ENCODE measurements at regions of chr16 and their contacts with region 1.

Region 1: GRCh38 chr16:27449434-27450195 is 47.6 kb downstream of the IL21R start:
- DNase-seq: peak; percentile 78
- ATAC-seq: peak; percentile 78
- H3K4me3 Mint-ChIP-seq: peak overlapping the region; percentile 85
- H3K27ac Mint-ChIP-seq: peak overlapping the region; percentile 99
- H3K4me1 Mint-ChIP-seq: peaks cover 97% of the 10 kb centered on the region
- H3K27me3 Mint-ChIP-seq: no peaks in the 10 kb centered on the region
- CTCF ChIP-seq: no peak

Region 2: DNA sequence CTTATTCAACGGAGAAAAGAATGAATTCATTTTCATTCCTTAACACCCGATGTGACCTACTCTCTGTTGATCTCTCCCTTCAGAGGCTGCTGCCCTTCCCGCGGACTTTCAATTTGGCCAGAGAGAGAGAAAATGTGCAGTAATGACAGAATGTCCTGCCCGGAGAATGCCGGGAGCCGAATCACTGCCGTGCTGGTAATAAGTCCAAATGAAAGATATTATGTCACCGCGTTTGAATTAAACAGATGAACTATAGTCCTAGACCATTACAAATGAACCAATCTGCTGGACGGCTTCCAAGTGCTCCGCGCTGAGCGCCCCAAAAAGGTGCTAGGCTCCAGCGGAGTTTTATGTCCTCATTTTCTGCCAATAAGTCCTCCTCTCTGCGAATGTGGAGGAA is 397.6 kb before region 1 on chr16:
- CTCF ChIA-PET with region 1: no interaction called
- POLR2A ChIA-PET with region 1: no interaction called
- intact Hi-C with region 1: no loop called
- DNase-seq: no peak
- ATAC-seq: no peak
- H3K4me3 Mint-ChIP-seq: no peak overlapping the region
- H3K27ac Mint-ChIP-seq: no peak overlapping the region
- H3K4me1 Mint-ChIP-seq: no peaks in the 10 kb centered on the region
- H3K27me3 Mint-ChIP-seq: no peaks in the 10 kb centered on the region
- CTCF ChIP-seq: no peak

Region 3: GRCh38 chr16:27179500-27180072 is 270.0 kb before region 1 on chr16:
- CTCF ChIA-PET with region 1: interaction called, 11 read pairs
- POLR2A ChIA-PET with region 1: interaction called, 5 read pairs
- intact Hi-C with region 1: no loop called
- DNase-seq: peak; percentile 73
- ATAC-seq: peak; percentile 99
- H3K4me3 Mint-ChIP-seq: no peak overlapping the region
- H3K27ac Mint-ChIP-seq: peak overlapping the region; percentile 5
- H3K4me1 Mint-ChIP-seq: peaks cover 28% of the 10 kb centered on the region
- H3K27me3 Mint-ChIP-seq: no peaks in the 10 kb centered on the region
- CTCF ChIP-seq: peak; percentile 49

Region 4: DNA sequence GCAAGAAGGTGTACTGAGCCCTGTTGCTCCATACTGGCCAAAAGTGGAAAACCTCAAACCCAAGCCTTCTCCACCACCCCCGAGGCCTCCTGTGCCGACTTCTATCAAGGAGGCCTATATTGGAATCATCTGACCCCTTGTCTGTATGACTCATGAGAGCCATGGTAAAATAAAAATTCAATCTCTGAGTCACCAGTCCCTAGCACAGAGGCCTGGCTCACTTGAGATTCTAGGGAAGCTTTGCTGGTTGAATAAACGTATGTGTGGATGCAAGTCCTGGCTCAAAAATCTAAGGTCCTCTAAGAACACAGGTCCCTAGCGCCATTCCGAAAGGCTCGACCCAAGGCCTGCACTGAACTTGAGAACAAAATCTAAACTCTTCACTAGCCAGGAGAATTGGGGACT is 196.1 kb before region 1 on chr16:
- CTCF ChIA-PET with region 1: no interaction called
- POLR2A ChIA-PET with region 1: interaction called, 11 read pairs
- intact Hi-C with region 1: no loop called
- DNase-seq: no peak
- ATAC-seq: peak; percentile 40
- H3K4me3 Mint-ChIP-seq: peak overlapping the region; percentile 65
- H3K27ac Mint-ChIP-seq: peak overlapping the region; percentile 88
- H3K4me1 Mint-ChIP-seq: peaks cover 65% of the 10 kb centered on the region
- H3K27me3 Mint-ChIP-seq: no peaks in the 10 kb centered on the region
- CTCF ChIP-seq: no peak

Region 5: GRCh38 chr16:27318392-27319226 is 131.0 kb before region 1 on chr16:
- CTCF ChIA-PET with region 1: no interaction called
- POLR2A ChIA-PET with region 1: interaction called, 6 read pairs
- intact Hi-C with region 1: loop called (anchors 1 kb)
- DNase-seq: peak; percentile 43
- ATAC-seq: peak; percentile 72
- H3K4me3 Mint-ChIP-seq: peak overlapping the region; percentile 88
- H3K27ac Mint-ChIP-seq: peak overlapping the region; percentile 90
- H3K4me1 Mint-ChIP-seq: peaks cover 90% of the 10 kb centered on the region
- H3K27me3 Mint-ChIP-seq: no peaks in the 10 kb centered on the region
- CTCF ChIP-seq: no peak

Region 6: DNA sequence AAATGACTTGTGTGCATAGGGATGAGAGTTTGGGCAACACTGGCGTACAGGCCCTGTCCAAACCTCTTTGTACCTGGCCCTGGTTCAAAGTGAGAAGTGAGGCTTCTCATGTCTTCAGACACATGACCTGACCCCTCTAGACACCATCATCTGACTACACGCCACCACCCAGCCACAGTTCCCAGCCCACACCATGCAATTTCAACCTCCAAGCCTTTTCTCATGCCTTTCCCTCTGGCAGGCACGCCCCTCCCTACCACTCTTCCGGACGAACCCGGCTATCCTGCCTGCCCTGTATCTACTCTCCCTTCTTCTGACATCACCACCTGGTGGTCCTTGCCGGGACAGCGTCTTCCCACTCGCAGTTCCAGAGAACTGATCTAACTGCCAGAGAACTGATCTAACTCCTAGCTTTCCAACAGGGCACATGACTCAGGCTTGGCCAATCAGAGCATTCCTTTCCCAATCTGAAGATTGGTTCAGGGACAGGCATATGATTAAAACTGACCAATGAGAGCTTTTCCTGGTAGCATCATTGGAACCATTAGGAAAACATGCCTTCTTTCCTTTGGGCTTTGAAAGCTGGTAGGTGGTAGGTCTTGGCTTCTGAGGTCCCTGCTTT is 74.7 kb before region 1 on chr16:
- CTCF ChIA-PET with region 1: interaction called, 6 read pairs
- POLR2A ChIA-PET with region 1: interaction called, 33 read pairs
- intact Hi-C with region 1: loop called (anchors 1 kb)
- DNase-seq: no peak
- ATAC-seq: peak; percentile 35
- H3K4me3 Mint-ChIP-seq: no peak overlapping the region
- H3K27ac Mint-ChIP-seq: no peak overlapping the region
- H3K4me1 Mint-ChIP-seq: peaks cover 48% of the 10 kb centered on the region
- H3K27me3 Mint-ChIP-seq: no peaks in the 10 kb centered on the region
- CTCF ChIP-seq: no peak

Region 7: DNA sequence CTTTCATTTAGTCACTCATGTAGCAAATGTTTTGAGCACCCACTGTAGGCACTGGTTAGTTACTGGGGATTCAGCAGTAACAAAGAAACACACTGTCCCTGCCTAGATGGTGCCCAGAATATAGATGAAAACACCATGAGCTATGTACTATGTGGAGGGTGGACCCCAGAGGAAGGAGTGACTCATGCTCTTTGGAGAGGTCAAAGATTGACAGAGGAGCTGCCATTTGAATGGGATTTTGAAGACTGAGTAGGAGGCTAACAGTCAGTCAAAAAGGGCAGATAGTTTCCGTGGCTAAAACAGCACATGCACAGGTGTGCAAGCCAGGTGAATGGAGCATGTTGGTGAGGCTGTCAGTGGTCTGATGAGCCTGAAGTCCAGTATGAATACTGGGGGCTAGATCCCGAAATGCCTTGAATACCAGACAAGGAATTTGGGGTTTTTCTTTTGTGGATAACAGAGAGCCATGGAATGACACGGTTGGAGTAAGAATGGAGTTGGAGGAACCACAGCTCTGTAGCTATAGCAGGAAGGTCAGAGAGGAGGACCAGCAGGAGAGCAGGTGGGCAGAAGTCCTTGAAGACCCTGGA is 41.5 kb before region 1 on chr16:
- CTCF ChIA-PET with region 1: interaction called, 3 read pairs
- POLR2A ChIA-PET with region 1: interaction called, 464 read pairs
- intact Hi-C with region 1: loop called (anchors 1 kb)
- DNase-seq: no peak
- ATAC-seq: peak; percentile 35
- H3K4me3 Mint-ChIP-seq: peak overlapping the region; percentile 71
- H3K27ac Mint-ChIP-seq: peak overlapping the region; percentile 96
- H3K4me1 Mint-ChIP-seq: peaks cover 90% of the 10 kb centered on the region
- H3K27me3 Mint-ChIP-seq: no peaks in the 10 kb centered on the region
- CTCF ChIP-seq: no peak

Region 8: GRCh38 chr16:27436921-27437650 is 12.5 kb before region 1 on chr16:
- CTCF ChIA-PET with region 1: no interaction called
- POLR2A ChIA-PET with region 1: interaction called, 95 read pairs
- intact Hi-C with region 1: no loop called
- DNase-seq: peak; percentile 12
- ATAC-seq: no peak
- H3K4me3 Mint-ChIP-seq: no peak overlapping the region
- H3K27ac Mint-ChIP-seq: no peak overlapping the region
- H3K4me1 Mint-ChIP-seq: peaks cover 22% of the 10 kb centered on the region
- H3K27me3 Mint-ChIP-seq: no peaks in the 10 kb centered on the region
- CTCF ChIP-seq: no peak

Region 9: GRCh38 chr16:27461483-27462171 is 12.0 kb after region 1 on chr16:
- CTCF ChIA-PET with region 1: no interaction called
- POLR2A ChIA-PET with region 1: no interaction called
- intact Hi-C with region 1: no loop called
- DNase-seq: no peak
- ATAC-seq: no peak
- H3K4me3 Mint-ChIP-seq: no peak overlapping the region
- H3K27ac Mint-ChIP-seq: no peak overlapping the region
- H3K4me1 Mint-ChIP-seq: peaks cover 8% of the 10 kb centered on the region
- H3K27me3 Mint-ChIP-seq: no peaks in the 10 kb centered on the region
- CTCF ChIP-seq: no peak

Region 10: GRCh38 chr16:27475561-27475960 is 25.9 kb after region 1 on chr16:
- CTCF ChIA-PET with region 1: no interaction called
- POLR2A ChIA-PET with region 1: no interaction called
- intact Hi-C with region 1: no loop called
- DNase-seq: no peak
- ATAC-seq: no peak
- H3K4me3 Mint-ChIP-seq: no peak overlapping the region
- H3K27ac Mint-ChIP-seq: no peak overlapping the region
- H3K4me1 Mint-ChIP-seq: no peaks in the 10 kb centered on the region
- H3K27me3 Mint-ChIP-seq: no peaks in the 10 kb centered on the region
- CTCF ChIP-seq: no peak

Region 11: DNA sequence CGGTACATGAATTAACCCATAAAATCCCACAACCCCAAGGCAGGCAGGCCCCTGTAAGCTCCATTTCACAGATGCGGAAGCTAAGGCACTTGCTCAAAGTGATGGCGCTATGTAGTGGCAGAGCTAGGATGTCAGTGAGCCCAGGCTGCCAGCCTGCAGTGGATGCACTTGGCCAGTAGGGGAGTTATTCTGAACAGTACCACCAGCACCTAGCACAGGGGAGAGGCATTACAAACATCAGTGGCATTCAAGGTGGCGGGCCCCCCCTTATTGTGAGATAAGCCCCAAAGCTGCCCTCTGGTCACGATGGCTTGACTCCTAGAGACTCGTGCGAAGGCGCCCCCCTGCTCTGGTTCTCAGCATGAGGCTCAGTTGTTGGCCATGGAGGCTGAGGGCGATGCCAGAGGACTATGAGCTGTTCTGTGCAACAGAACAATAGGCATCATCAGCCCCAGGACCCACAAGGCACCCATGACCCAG is 66.3 kb after region 1 on chr16:
- CTCF ChIA-PET with region 1: no interaction called
- POLR2A ChIA-PET with region 1: no interaction called
- intact Hi-C with region 1: no loop called
- DNase-seq: no peak
- ATAC-seq: peak; percentile 42
- H3K4me3 Mint-ChIP-seq: no peak overlapping the region
- H3K27ac Mint-ChIP-seq: no peak overlapping the region
- H3K4me1 Mint-ChIP-seq: no peaks in the 10 kb centered on the region
- H3K27me3 Mint-ChIP-seq: no peaks in the 10 kb centered on the region
- CTCF ChIP-seq: no peak

Measured in activated B cell treated with CpG ODN at 0.5 μM for 24 hours (primary cell).